Mammary epithelial cell (primary cell): ENCODE measurements at regions of chr2 and their contacts with region 1.

Region 1: GRCh38 chr2:189412330-189412953 is 28.8 kb upstream of the WDR75 start:
- DNase-seq: no peak
- H3K4me3 ChIP-seq: no peak overlapping the region
- H3K27ac ChIP-seq: no peak overlapping the region
- H3K4me1 ChIP-seq: peaks cover 18% of the 10 kb centered on the region
- H3K27me3 ChIP-seq: no peaks in the 10 kb centered on the region
- CTCF ChIP-seq: peak; percentile 63 to 74

Region 2: DNA sequence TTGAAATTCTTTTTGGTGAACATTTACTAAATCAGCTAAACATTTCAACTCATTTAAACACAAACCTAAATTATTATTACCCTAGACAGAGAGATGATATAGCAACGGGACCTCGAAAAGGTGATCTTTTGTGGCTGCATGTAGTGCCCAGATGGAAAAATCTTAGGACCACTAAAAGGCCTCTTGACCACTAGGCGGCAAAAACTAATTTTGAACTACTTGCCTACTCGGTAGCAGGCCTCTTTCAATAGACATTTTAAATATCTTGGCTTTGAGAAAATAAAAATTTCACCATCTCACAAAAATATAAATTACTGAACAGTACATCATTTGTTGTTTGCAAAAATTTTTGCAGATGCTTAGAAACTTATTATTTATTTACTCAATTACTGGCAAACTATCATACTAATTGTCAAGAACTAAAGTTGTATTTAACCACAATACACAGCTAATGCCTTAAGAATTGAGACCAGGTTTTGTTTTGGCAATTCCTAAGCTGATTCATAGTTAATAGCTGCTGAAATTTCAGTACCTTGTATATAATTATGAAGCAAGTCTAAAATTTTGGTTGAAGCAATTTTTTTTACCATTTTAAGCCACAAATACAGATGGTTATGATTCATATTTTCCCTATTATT is 428.9 kb before region 1 on chr2:
- CTCF ChIA-PET with region 1: no interaction called
- dilution Hi-C with region 1: no loop called
- in situ Hi-C with region 1: no loop called
- intact Hi-C with region 1: loop called (anchors 1 kb)
- DNase-seq: no peak
- H3K4me3 ChIP-seq: no peak overlapping the region
- H3K27ac ChIP-seq: no peak overlapping the region
- H3K4me1 ChIP-seq: no peaks in the 10 kb centered on the region
- H3K27me3 ChIP-seq: no peaks in the 10 kb centered on the region
- CTCF ChIP-seq: peak; percentile 36 to 39

Region 3: DNA sequence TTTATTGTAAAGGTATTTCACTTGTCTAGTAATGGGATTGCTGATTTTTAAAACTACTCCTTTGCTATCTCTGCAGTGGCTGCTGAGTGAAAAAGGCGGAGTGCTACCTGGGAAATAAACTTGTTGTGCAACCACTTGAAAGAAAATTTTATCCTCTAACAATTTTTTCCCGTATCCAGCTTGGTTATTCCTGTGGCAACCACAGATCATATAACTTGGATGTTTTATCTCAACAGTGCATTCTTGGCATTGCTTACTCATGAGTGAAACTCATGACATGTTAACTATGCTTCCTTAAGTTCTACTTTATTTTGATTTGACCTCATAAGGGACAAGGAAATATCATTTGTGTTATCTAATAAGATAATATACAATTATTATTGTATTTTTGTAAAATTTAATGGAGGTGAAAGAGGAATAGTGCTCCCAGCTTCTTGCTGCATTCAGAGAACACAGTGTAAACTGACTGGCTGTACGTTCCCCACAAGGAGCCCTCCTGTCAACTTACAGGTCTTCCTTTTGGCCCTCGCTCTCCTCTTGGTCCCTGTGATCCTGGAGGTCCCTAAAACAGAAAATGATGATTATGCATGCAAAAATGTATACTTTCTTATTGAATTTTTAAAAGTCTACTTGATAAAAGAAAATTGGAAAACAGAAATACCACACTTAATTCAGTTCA is 315.5 kb before region 1 on chr2:
- CTCF ChIA-PET with region 1: no interaction called
- dilution Hi-C with region 1: no loop called
- in situ Hi-C with region 1: loop called (anchors 5 to 10 kb)
- intact Hi-C with region 1: loop called (anchors 1 kb)
- DNase-seq: peak; percentile 60
- H3K4me3 ChIP-seq: no peak overlapping the region
- H3K27ac ChIP-seq: no peak overlapping the region
- H3K4me1 ChIP-seq: peaks cover 6% of the 10 kb centered on the region
- H3K27me3 ChIP-seq: no peaks in the 10 kb centered on the region
- CTCF ChIP-seq: no peak

Region 4: GRCh38 chr2:189115126-189115525 is 297.3 kb before region 1 on chr2:
- CTCF ChIA-PET with region 1: no interaction called
- dilution Hi-C with region 1: no loop called
- in situ Hi-C with region 1: no loop called
- intact Hi-C with region 1: loop called (anchors 1 kb)
- DNase-seq: no peak
- H3K4me3 ChIP-seq: no peak overlapping the region
- H3K27ac ChIP-seq: no peak overlapping the region
- H3K4me1 ChIP-seq: no peaks in the 10 kb centered on the region
- H3K27me3 ChIP-seq: no peaks in the 10 kb centered on the region
- CTCF ChIP-seq: peak in 1 of 2 donors; percentile 23

Region 5: DNA sequence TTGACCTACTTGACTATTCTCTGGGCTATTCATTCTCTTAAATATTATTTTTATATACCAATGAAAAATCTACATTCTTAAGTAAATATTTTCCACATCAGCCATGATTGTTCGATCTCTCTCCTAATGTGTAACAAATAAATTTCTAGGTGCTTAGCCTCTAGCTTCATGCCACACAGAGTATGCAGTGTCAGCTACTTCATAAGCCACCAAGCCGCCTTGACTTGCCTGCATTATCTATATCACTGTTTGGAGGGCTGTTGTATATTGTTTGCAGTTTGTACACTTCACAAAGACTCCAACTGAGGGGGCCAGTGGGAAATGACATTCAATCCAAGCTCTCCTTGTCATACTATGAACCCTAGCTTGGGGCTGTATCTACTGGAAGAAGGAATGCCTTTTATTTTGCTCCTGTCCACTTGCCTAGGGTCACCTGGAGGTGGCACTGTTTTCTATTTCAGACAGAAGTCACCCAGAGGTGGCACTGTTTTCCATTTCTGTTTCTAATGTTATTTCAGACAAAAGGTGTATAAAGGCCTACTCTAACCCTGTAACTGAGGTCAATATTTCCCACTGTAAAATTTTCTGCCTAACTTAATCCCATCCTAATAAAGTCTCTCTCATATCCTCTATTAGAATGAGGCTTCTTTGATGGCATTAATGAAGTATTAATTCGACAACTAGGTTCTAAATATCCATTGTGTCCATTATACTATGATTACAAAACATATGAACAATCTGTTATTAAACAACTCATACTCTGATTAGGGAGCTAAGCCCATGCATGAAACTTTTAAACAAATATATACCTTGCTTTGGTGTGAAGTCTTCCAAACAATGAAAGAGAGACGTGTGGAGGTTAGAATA is 269.3 kb before region 1 on chr2:
- CTCF ChIA-PET with region 1: no interaction called
- dilution Hi-C with region 1: no loop called
- in situ Hi-C with region 1: no loop called
- intact Hi-C with region 1: loop called (anchors 1 kb)
- DNase-seq: peak; percentile 52
- H3K4me3 ChIP-seq: no peak overlapping the region
- H3K27ac ChIP-seq: no peak overlapping the region
- H3K4me1 ChIP-seq: no peaks in the 10 kb centered on the region
- H3K27me3 ChIP-seq: no peaks in the 10 kb centered on the region
- CTCF ChIP-seq: peak; percentile 96 to 98

Region 6: DNA sequence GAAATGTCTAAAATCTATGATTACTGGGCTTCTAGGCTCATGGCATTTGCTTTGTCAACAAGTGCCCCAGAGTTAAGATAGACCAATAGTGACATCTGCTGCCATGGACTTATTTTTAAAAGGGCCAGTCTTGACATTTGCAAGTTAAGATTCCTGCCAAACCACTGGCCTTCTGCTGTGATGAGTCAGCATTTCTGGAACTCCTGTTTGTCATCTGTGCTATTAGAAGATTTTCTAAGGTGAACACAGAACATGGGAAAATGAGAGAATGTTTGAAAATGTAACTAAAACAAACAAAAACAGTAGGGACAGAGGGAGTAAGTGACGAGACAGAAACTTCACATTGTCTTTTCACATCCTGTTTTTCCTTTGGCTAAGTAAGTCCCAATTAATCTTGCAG is 64.9 kb before region 1 on chr2:
- CTCF ChIA-PET with region 1: no interaction called
- dilution Hi-C with region 1: no loop called
- in situ Hi-C with region 1: no loop called
- intact Hi-C with region 1: loop called (anchors 1 kb)
- DNase-seq: peak; percentile 80
- H3K4me3 ChIP-seq: no peak overlapping the region
- H3K27ac ChIP-seq: peak overlapping the region; percentile 67
- H3K4me1 ChIP-seq: peaks cover 11% of the 10 kb centered on the region
- H3K27me3 ChIP-seq: no peaks in the 10 kb centered on the region
- CTCF ChIP-seq: peak in 1 of 2 donors; percentile 47